Esophagus muscularis mucosa (tissue), 4 donors: ENCODE measurements at regions of chr12 and their contacts with region 1.

Region 1: GRCh38 chr12:43805860-43806736 is at the start of gene TWF1:
- DNase-seq: peak; percentile 95
- H3K4me3 ChIP-seq: peak within 1 kb of the TSS; percentile 91 to 97 (median 95)
- H3K27ac ChIP-seq: peak within 1 kb of the TSS; percentile 90 to 98 (median 95)
- H3K4me1 ChIP-seq: peaks cover 19 to 33% (median 32%) of the 10 kb centered on the region in 4 donors
- H3K27me3 ChIP-seq: no peaks in the 10 kb centered on the region
- CTCF ChIP-seq: peak in 2 of 3 experiments; percentile 24 to 38
- EP300 ChIP-seq: no peak
- POLR2A ChIP-seq: no peak
- total RNA-seq, gene TWF1: 94.7 to 105 (median 97.3) TPM

Region 2: DNA sequence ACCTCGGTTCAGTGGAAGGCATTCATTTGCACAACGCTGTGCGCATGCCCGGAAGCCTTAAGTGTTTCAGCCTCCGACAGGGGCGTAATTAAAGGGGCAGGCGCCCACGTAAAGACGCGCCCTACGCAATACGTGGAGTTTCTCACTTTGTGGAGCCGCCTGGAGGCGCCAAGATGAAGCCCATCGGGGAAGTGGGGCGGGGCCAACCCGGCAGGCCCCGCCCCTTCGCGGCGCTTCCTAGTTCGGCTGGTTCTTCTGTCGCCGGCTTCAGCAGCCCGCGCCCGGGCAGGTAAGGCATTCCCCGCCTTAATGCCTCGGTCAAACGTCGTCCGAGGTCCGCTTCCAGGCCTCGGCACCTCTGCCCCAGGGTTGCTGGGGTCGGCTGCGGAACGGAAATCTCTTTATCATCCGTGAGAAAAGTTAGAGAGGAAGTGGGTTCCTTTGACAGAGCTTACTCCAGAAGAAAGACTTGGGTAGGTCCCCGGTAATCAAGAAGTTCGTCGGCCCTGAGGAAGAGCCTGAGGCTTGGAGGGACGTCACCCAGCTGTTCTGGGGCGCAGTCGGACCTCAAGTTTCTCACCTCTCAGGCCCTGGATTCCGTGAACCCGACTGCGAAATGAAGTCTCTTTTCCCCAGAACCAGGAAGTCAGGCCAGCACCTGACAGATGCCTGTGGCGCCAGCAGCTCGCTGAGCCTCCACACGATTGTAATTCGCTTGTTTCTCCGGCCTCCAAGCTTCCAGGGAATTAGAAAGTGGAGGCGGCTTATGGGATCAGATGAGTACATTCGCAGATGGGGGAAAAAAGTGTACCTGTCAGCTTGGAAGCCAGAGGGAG is 47.2 kb before region 1 on chr12 and contains the starts of genes IRAK4 and PUS7L:
- intact Hi-C with region 1: loop called (anchors 5 kb)
- DNase-seq: peak; percentile 99
- H3K4me3 ChIP-seq: peak within 1 kb of the TSS; percentile 65 to 75 (median 73)
- H3K27ac ChIP-seq: peak within 1 kb of the TSS; percentile 81 to 89 (median 85)
- H3K4me1 ChIP-seq: peaks cover 22 to 33% (median 29%) of the 10 kb centered on the region in 4 donors
- H3K27me3 ChIP-seq: no peaks in the 10 kb centered on the region
- CTCF ChIP-seq: peak; percentile 33 to 54 (median 34)
- EP300 ChIP-seq: no peak
- POLR2A ChIP-seq: peak; percentile 30
- total RNA-seq, gene IRAK4: 13.6 to 24.0 (median 20.6) TPM
- total RNA-seq, gene PUS7L: 5.2 to 8.7 (median 6.7) TPM

Region 3: DNA sequence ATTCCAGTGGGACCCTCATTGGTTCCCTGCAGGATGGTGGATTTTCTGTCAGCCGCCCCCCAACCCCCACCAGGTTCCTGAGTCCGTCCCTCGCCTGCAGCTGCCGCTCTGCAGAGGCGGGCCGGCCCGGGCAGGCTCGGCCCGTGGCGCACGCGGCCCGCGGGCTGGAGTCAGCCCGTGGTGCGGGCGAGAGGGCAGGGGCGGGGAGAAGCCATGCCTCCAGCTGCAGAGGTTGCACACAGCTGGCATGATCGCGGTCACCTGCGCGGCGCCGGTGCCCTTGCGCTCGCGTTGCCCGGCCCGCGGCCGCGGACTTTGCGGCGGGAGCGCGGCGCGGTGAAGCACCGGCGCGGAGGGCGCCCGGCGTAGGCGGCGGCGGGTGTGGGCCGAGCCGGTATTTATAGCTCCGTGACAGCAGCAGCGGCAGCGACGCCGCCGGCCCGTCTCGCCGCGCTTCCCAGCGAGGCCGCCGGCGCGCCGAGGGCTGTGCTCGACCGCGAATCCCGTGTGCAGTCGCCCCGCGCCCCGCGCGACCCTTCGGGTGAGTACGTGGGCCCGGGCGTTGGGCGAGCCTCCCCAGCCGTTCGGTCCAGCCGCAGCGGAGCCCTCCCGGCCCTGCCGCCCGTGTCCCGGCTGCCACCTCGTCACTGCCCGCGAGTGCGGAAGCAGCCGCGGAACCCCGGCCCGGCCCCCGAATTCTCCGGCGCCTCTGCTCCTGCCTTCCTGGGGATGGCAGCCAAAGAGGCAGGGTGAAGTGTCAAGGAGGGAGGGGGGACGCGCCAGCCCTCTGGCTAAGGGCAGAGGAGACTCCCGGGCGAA is 29.8 kb after region 1 on chr12 and contains the start of gene TMEM117:
- intact Hi-C with region 1: loop called (anchors 1 kb)
- DNase-seq: no peak
- H3K4me3 ChIP-seq: peak within 1 kb of the TSS; percentile 80 to 89 (median 84)
- H3K27ac ChIP-seq: peak within 1 kb of the TSS; percentile 96 to 98 (median 97)
- H3K4me1 ChIP-seq: peaks cover 8 to 21% (median 19%) of the 10 kb centered on the region in 4 donors
- H3K27me3 ChIP-seq: no peaks in the 10 kb centered on the region
- CTCF ChIP-seq: no peak
- EP300 ChIP-seq: no peak
- POLR2A ChIP-seq: peak; percentile 27
- total RNA-seq, gene TMEM117: 11.2 to 18.7 (median 12.8) TPM

Region 4: DNA sequence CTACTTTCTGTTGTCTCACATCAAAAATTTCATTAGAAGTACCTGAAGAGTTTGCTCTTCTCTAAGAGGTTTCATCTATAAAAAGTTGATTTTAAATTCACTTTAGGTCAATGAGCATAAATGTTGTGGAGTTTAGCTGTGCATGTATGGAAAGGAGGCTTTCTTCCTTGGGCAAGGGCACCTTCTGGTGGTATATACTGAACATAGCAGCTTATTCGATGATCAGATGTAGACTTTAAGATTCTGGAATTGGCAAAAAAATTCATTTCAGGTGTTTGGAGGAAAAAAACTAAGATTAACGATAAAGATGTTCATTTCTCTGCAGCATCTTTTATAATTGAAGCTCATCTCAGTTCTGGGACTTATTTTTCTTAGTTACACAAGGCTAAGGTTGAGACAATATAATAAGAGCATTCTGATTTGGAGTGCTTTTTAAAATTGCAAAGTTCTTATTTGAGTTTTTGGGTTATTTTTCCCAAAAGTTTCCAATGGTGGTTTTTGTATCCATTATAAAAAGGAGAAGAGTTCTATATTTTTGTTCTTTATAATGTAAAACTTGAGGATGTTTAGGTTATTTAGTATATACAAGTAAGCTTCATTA is 76.6 kb after region 1 on chr12:
- intact Hi-C with region 1: loop called (anchors 10 kb)
- DNase-seq: no peak
- H3K4me3 ChIP-seq: no peak overlapping the region
- H3K27ac ChIP-seq: no peak overlapping the region
- H3K4me1 ChIP-seq: no peaks in the 10 kb centered on the region
- H3K27me3 ChIP-seq: no peaks in the 10 kb centered on the region
- CTCF ChIP-seq: peak; percentile 60 to 76 (median 66)
- EP300 ChIP-seq: no peak
- POLR2A ChIP-seq: no peak